A673 (cell line): ENCODE measurements at regions of chr1 and their contacts with region 1.

Region 1: DNA sequence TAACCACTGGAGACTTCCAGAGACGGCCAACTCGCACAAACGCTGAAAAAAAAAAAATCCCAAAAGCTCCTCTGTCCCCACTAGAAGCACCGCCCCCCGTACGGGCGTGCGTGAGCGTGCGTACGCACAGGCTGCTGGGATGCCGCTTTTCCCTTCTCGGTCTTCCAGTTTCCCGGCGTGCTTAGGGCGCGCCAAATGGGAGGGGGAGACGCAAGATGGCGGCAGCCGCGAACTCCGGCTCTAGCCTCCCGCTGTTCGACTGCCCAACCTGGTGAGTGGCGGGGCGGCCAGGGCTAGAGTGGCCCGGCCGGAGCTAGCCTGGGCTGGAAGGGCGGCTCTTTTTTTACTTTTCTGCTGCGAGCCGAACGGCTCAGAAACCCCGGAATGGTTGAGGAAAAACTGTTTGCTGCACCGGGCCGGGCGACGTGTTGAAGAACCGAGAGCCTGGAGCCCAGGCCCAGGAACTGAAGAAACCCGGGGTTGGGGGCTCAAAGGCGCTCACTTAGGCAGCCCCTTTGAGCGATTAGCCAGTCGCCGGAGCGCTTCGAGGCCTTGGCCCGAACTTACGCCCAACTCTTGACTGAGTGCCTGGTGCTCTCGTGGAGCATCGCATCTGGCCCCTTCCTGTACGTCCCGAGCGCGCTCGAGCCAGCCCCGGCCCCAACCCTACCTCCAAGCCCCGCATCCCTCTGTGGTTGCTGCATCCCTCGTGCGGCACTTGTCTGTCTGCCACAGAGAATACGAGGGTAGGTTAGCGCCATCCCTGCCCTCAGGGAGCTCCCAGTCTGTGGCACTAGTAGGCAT is at the start of gene PPP1R8:
- DNase-seq: peak; percentile 99
- H3K4me3 ChIP-seq: peak within 1 kb of the TSS; percentile 73
- H3K27ac ChIP-seq: peak within 1 kb of the TSS; percentile 92
- H3K4me1 ChIP-seq: peaks cover 9% of the 10 kb centered on the region
- H3K27me3 ChIP-seq: no peaks in the 10 kb centered on the region
- CTCF ChIP-seq: no peak
- total RNA-seq, gene PPP1R8: 60.9 and 68.8 TPM in 2 replicates

Region 2: GRCh38 chr1:27858072-27858958 is 27.5 kb after region 1 on chr1:
- CTCF ChIA-PET with region 1: interaction called, 16 read pairs
- POLR2A ChIA-PET with region 1: no interaction called
- intact Hi-C with region 1: no loop called
- DNase-seq: peak; percentile 93
- H3K4me3 ChIP-seq: no peak overlapping the region
- H3K27ac ChIP-seq: no peak overlapping the region
- H3K4me1 ChIP-seq: peaks cover 4% of the 10 kb centered on the region
- H3K27me3 ChIP-seq: no peaks in the 10 kb centered on the region
- CTCF ChIP-seq: peak; percentile 98

Region 3: GRCh38 chr1:27906759-27907158 is 75.9 kb after region 1 on chr1:
- CTCF ChIA-PET with region 1: no interaction called
- POLR2A ChIA-PET with region 1: interaction called, 18 read pairs
- intact Hi-C with region 1: no loop called
- DNase-seq: no peak
- H3K4me3 ChIP-seq: no peak overlapping the region
- H3K27ac ChIP-seq: no peak overlapping the region
- H3K4me1 ChIP-seq: no peaks in the 10 kb centered on the region
- H3K27me3 ChIP-seq: no peaks in the 10 kb centered on the region
- CTCF ChIP-seq: no peak